Left cardiac atrium (tissue), 4 donors: ENCODE measurements at regions of chr3 and their contacts with region 1.

Region 1: GRCh38 chr3:126752303-126752842 is 48.3 kb downstream of the CHCHD6 start:
- DNase-seq: peak; percentile 86
- ATAC-seq: peak; percentile 92 to 96

Region 2: DNA sequence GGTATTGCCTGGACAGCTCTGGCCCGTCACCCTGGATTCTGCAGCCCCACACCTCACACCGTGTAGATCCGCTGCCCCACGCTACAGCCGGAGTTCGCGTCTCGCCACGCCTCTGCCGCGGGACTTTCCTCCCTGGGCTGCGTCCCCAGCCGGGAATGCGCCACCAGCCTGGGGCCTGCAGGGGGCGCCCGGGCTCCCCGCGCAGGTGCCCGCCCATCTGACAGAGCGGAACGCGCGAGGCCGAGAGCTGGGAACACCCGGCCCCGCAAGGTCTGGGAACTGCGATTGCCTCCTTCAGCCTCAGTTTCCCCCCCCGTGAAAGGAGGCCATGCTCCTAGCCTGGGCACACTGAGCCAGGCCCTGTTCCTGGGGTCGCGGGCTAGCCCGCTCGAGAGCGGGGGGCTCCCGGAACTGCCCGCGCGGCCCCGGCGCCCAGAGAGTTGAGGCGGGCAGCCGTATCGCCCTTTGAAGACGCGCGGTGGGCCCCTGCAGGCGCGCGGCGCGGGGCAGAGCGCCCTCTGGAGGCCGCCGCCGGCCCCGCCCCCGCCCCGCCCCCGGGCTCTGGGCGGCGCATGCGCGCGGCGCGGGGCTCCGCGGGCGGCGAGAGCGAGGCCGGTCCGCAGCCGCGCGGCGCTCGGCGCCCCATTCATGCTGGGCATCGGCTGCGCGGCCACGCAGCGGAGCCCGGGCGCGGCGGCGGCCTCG is 230.2 kb after region 1 on chr3 and contains the start of gene PLXNA1:
- intact Hi-C with region 1: loop called (anchors 2 to 5 kb)
- DNase-seq: peak; percentile 87
- ATAC-seq: peak; percentile 88 to 89
- total RNA-seq, gene PLXNA1: 18.6 to 20.4 TPM

Region 3: DNA sequence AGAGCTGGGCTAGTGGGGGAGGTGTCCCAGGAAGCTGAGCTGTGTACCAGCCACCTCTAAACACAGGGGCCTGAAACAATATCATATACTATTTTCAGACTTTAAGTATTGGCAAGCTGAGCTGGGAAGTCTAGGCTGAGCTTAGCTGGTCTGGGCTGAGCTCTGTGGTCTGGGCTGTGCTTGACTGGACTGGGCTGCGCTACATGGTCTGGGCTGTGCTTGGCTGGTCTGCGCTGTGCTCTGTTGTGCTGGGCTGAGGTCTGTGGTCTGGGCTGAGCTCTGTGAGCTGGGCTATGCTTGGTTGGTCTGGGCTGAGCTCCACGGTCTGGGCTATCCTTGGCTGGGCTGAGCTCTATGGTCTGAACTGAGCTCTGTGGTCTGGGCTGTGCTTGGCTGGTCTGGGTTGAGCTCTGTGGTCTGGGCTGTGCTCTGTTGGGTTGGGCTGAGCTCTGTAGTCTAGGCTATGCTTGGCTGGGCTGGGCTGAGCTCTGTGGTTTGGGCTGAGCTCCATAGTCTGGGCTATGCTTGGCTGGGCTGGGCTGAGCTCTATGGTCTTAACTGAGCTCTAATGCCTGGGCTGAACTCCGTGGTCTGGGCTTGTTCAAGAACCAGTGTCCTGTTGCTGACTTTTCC is 322.5 kb after region 1 on chr3:
- intact Hi-C with region 1: no loop called
- DNase-seq: peak; percentile 35
- ATAC-seq: peak; percentile 66 to 83

Region 4: DNA sequence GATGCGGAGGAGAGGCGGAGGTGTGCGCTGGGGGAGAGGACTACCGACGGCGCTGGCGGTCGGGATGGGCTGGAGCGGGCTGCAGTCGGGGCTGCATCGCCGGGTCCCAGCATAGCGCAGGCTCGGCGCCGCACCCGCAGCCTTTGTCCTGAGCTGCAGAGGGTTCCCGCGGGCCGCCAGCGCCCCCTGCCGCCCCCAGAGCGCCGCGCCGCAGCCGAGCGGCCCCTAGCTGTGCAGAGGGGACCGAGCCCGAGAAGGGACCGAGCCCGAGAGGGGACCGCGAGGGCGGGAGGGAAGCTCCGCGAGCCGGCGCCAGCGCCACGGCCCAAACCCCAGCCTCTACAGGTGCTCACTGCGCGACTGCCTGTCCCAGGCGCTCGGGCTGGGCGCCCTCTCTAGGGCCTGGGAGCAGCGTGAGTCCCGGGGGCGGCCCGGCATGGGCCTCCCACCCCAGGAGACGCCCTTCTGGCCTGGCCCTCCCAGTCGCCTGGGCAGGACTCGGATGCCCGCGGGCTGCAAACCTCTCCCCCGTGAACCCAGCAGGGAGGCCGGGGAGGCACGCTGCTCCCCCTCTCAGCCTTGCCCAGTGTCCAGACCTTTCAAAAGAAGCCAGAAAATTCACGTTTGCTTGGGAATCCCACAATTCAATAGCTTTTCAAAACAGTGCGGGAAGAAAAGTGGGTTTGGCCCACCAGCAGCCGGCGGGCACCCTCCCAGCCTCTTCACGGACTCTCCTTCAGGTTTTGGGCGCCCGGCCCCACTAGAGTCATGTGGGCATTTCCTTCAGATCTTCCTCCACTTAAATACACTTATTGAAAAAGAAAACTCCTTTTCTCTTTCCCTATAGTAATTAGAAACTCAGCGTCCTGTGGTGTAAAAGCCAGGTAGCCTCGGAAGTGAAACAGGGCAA is 703.4 kb after region 1 on chr3:
- intact Hi-C with region 1: loop called in 1 of 2 experiments (anchors 10 kb)
- DNase-seq: peak; percentile 72
- ATAC-seq: peak; percentile 92 to 93

Region 5: GRCh38 chr3:127544192-127544802 is 791.9 kb after region 1 on chr3:
- intact Hi-C with region 1: loop called in 1 of 2 experiments (anchors 10 kb)
- DNase-seq: peak; percentile 80
- ATAC-seq: peak in 1 of 2 donors; percentile 48